Head of caudate nucleus (tissue), 42 donors: ENCODE measurements at regions of chr1 and their contacts with region 1.

Region 1: DNA sequence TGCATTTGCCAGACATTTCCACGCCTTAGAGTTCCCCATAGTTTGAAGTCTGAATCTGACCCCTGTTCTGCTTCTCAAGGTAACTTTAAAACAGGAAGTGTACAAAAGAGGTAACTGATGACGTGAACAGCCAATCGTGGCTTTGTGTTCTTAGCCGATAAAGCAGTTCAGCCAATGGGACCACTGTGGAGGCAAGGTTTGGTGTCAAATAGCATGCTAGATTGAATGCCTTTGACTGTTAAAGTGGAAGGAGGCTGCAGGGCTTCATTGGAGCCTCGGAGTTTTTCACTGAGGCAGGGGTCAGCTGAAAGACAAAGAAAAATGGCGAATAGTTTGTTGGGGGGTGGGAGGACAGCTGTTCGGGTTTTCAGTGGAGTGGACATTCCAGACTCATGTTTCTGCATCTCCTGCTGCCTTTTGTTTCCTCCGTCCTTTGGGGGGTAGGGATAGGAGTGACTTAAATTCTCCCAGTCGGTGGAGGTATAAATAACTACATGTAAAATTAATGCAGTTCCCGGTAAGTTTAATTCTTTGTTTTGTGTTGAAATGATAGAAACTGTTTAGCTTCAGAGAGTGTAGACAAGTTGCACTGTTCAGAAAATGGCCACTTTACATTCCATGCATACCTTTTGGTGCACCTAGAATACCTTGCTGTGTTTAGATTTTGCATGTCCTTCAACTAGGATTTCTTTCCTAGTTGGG is 17.7 kb downstream of the NFYC start:
- DNase-seq: peak; percentile 23 to 96 (median 84)

Region 2: DNA sequence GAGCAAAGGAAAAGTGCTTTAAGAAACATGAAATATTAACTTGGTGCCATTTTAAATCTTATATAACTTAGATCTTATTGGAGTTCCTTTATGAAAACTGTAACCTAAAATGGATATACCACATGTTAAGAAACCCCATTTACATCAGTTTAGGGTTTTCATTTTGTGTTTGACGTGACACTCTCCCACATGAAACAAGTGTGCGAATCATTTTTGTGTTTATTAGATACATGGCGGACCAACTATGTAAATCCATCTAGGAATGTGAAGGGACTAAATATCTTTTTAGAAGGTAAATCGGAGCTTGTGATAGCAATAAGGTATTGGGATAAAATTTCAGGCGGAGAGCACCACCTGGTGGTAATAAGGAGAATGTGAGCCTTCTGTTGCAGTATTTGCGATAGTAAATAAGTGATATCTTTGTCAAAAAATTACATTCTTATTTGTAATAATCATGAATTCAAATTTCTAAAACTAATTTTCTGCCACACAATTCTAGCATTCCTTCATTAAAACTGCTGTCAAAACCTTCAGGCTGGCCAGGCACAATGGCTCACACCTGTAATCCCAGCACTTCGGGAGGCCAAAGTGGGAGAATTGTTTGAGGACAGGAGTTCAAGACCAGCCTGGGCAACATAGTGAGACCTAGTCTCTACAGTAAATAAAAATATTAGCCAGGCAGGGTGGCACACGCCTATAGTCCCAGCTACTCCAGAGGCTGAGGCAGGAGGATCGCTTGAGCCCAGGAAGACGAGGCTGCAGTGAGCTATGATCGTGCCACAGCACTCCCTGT is 304.4 kb before region 1 on chr1:
- intact Hi-C with region 1: no loop called
- DNase-seq: peak in 31 of 42 donors; percentile 37 to 85 (median 58)

Region 3: GRCh38 chr1:40691538-40692428 is 17.5 kb before region 1 on chr1 and contains the start of gene NFYC:
- intact Hi-C with region 1: loop called (anchors 2 kb)
- DNase-seq: peak; percentile 93 to 98 (median 96)

Region 4: GRCh38 chr1:40838045-40838979 is 129.1 kb after region 1 on chr1:
- intact Hi-C with region 1: no loop called
- DNase-seq: no peak

Region 5: GRCh38 chr1:40939320-40940059 is 230.2 kb after region 1 on chr1:
- intact Hi-C with region 1: no loop called
- DNase-seq: peak in 5 of 42 donors; percentile 15 to 56 (median 35)

Region 6: GRCh38 chr1:40951943-40952743 is 242.9 kb after region 1 on chr1:
- intact Hi-C with region 1: no loop called
- DNase-seq: peak; percentile 65 to 92 (median 80)